ENCODE measurements at regions of chr12 and their contacts with region 1.

Region 1: DNA sequence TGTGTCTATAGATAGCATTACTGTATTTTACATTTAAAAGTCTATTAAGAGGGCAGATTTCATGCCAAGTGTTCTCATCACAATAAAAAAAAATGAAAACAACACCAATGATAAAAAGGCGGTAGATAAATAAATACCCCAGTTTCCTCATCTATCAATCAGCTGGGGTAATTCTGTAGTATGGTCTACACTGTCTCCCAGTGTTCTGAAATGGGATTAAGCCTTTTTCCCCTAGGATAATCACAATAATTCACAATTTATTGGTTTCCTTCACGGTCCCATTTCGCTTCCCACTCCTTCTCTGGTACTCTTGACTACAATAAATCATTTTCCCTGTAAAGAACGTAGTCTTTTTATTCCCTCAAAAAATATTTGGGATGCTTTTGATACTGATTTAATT is 114.3 kb downstream of the SSPN start:
- DNase-seq: no peak
- ATAC-seq: no peak
- H3K4me3 ChIP-seq: no peak overlapping the region
- H3K27ac ChIP-seq: no peak overlapping the region
- H3K4me1 ChIP-seq: no peaks in the 10 kb centered on the region
- H3K27me3 ChIP-seq: no peaks in the 10 kb centered on the region
- CTCF ChIP-seq: peak in 1 of 3 experiments; percentile 21; a peak in 2 of 6 replicates
- POLR2A ChIP-seq: no peak
- RAD21 ChIP-seq: peak; percentile 42; the same call in 1 of the 2 replicates

Region 2: GRCh38 chr12:25924491-25925463 is 384.9 kb before region 1 on chr12:
- CTCF ChIA-PET with region 1: no interaction called
- POLR2A ChIA-PET with region 1: no interaction called
- RAD21 ChIA-PET with region 1: no interaction called
- intact Hi-C with region 1: no loop called
- DNase-seq: no peak
- ATAC-seq: peak; percentile 52
- H3K4me3 ChIP-seq: no peak overlapping the region
- H3K27ac ChIP-seq: no peak overlapping the region
- H3K4me1 ChIP-seq: peaks cover 3 to 14% of the 10 kb centered on the region in 2 experiments; a peak in 3 of 4 replicates
- H3K27me3 ChIP-seq: no peaks in the 10 kb centered on the region
- CTCF ChIP-seq: no peak
- POLR2A ChIP-seq: no peak
- RAD21 ChIP-seq: no peak

Region 3: GRCh38 chr12:26126340-26127284 is 183.0 kb before region 1 on chr12:
- CTCF ChIA-PET with region 1: no interaction called
- POLR2A ChIA-PET with region 1: no interaction called
- RAD21 ChIA-PET with region 1: no interaction called
- intact Hi-C with region 1: loop called (anchors 10 kb)
- DNase-seq: no peak
- ATAC-seq: peak; percentile 76
- H3K4me3 ChIP-seq: peak overlapping the region; percentile 50 to 66
- H3K27ac ChIP-seq: peak overlapping the region; percentile 73
- H3K4me1 ChIP-seq: peaks cover 13 to 40% of the 10 kb centered on the region in 2 experiments
- H3K27me3 ChIP-seq: peaks cover 11% of the 10 kb centered on the region; the same call in 1 of the 2 replicates
- CTCF ChIP-seq: no peak
- POLR2A ChIP-seq: peak; percentile 9
- RAD21 ChIP-seq: no peak

Region 4: DNA sequence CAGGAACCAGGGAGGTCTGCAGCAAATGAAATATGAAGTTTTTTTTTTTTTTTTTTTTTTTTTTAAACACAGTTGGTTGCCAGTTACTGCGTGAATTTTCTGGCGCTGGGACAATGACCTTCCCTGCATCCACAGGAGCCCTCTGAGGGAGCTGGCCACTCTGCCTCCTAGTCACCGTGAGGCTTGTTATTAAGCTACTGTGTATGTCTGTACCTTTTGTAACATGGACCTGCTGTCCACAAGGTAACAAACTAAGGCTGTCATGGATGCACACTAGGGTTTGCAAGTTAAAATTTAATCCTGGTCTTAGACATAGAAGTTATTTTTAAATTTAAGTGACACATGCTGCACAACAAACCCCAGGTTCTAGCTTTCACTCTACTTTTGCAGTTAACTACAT is 96.7 kb after region 1 on chr12:
- CTCF ChIA-PET with region 1: no interaction called
- POLR2A ChIA-PET with region 1: no interaction called
- RAD21 ChIA-PET with region 1: no interaction called
- intact Hi-C with region 1: no loop called
- DNase-seq: no peak
- ATAC-seq: no peak
- H3K4me3 ChIP-seq: no peak overlapping the region
- H3K27ac ChIP-seq: no peak overlapping the region
- H3K4me1 ChIP-seq: peaks cover 8 to 12% of the 10 kb centered on the region in 2 experiments
- H3K27me3 ChIP-seq: no peaks in the 10 kb centered on the region
- CTCF ChIP-seq: no peak
- POLR2A ChIP-seq: no peak
- RAD21 ChIP-seq: no peak

Measured in HCT116 (cell line).